Activated CD4-positive, alpha-beta memory T cell treated with anti-CD3 and anti-CD28 coated beads, Interleukin-2, amount 10 ng/mL, durations not matched to agents 7 days and 5 days (primary cell): ENCODE measurements at regions of chr6 and their contacts with region 1.

Region 1: GRCh38 chr6:105992315-105992961 is 93.7 kb upstream of the PRDM1 start:
- DNase-seq: peak; percentile 92
- H3K4me3 Mint-ChIP-seq: peak overlapping the region; percentile 87
- H3K27ac Mint-ChIP-seq: peak overlapping the region; percentile 74
- H3K4me1 Mint-ChIP-seq: peaks cover 70% of the 10 kb centered on the region
- H3K27me3 Mint-ChIP-seq: peaks cover 5% of the 10 kb centered on the region

Region 2: DNA sequence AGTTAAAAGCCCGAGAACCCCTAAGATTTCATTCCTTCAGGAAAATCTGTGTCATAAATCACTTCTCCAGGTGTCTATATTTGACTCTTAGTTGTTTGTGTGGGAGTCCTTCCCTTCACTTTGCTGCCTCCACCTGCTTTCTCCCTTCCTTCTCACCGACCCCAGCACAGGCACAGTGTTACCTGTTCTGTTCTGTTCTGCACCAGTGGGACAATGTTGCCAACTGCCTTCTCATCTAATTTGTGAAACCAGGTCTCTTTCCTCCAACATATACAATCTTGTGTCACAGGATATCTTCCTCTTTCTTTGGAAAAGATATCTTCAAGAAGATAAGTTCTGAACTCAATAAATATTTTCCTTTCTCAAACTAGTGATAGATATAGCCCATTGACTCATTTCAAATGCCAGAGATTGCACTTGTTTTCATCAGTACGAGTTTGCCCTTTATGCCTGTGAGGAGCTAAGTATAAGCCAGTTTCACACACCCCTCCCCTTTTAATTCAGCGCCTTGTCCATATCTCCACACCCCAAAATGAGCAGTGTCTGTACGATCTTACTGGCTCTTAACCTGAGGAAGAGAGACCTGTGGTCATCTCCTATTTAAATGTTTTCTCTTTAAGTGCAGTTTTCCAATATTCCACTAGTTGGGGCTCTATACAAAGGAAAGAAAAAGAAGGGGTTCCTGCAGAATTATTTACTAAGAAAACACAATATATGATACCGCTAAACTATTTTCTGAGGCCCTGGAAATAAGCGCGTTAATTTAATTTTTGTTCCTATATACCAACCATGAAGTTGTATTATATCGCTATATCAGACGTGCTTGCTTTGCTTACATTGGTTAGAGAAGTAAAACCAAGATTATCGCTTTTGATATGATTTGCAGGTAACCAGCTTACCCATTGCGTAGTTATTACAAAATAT is 507.9 kb before region 1 on chr6:
- CTCF ChIA-PET with region 1: interaction called, 4 read pairs
- POLR2A ChIA-PET with region 1: interaction called, 23 read pairs
- DNase-seq: peak; percentile 23
- H3K4me3 Mint-ChIP-seq: peak overlapping the region; percentile 9
- H3K27ac Mint-ChIP-seq: peak overlapping the region; percentile 66
- H3K4me1 Mint-ChIP-seq: peaks cover 76% of the 10 kb centered on the region
- H3K27me3 Mint-ChIP-seq: no peaks in the 10 kb centered on the region

Region 3: GRCh38 chr6:105810105-105810921 is 182.1 kb before region 1 on chr6:
- CTCF ChIA-PET with region 1: interaction called, 7 read pairs
- POLR2A ChIA-PET with region 1: interaction called, 29 read pairs
- DNase-seq: peak; percentile 83
- H3K4me3 Mint-ChIP-seq: peak overlapping the region; percentile 33
- H3K27ac Mint-ChIP-seq: peak overlapping the region; percentile 92
- H3K4me1 Mint-ChIP-seq: peaks cover 78% of the 10 kb centered on the region
- H3K27me3 Mint-ChIP-seq: no peaks in the 10 kb centered on the region

Region 4: DNA sequence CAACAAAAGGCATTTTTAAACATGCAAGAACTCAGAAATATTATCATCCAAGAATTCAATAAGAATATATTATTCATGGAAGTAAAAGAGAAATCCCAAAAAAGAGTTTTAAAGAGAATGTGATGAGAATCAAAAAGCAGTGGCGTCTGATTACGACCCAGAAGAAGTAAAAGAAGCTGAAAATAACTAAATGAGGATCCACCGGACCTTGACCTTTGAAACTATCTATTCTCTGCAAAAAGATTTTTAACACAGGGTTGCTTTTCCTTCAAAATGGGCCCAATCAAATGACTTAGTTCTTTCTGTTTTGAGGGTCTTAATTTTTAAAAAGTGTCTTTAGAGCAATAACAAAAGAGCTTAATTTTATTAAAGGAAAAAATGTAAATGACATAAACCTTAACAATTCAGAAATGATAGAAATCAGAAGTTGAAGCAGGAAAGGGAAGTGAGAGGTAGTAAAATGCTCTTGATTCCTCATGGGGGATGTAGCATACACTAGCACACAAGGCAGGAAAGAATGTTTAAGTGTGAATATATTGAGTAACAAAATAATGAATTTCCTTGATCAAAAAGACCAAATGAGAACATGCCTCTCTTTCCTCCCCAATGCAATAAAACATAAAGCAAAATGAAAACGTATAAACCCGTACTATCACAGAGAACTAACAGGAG is 129.4 kb before region 1 on chr6:
- CTCF ChIA-PET with region 1: no interaction called
- POLR2A ChIA-PET with region 1: no interaction called
- DNase-seq: no peak
- H3K4me3 Mint-ChIP-seq: no peak overlapping the region
- H3K27ac Mint-ChIP-seq: no peak overlapping the region
- H3K4me1 Mint-ChIP-seq: peaks cover 6% of the 10 kb centered on the region
- H3K27me3 Mint-ChIP-seq: peaks cover 29% of the 10 kb centered on the region

Region 5: GRCh38 chr6:105880030-105880492 is 112.4 kb before region 1 on chr6:
- CTCF ChIA-PET with region 1: no interaction called
- POLR2A ChIA-PET with region 1: no interaction called
- DNase-seq: peak; percentile 25
- H3K4me3 Mint-ChIP-seq: peak overlapping the region; percentile 39
- H3K27ac Mint-ChIP-seq: no peak overlapping the region
- H3K4me1 Mint-ChIP-seq: peaks cover 56% of the 10 kb centered on the region
- H3K27me3 Mint-ChIP-seq: peaks cover 4% of the 10 kb centered on the region

Region 6: DNA sequence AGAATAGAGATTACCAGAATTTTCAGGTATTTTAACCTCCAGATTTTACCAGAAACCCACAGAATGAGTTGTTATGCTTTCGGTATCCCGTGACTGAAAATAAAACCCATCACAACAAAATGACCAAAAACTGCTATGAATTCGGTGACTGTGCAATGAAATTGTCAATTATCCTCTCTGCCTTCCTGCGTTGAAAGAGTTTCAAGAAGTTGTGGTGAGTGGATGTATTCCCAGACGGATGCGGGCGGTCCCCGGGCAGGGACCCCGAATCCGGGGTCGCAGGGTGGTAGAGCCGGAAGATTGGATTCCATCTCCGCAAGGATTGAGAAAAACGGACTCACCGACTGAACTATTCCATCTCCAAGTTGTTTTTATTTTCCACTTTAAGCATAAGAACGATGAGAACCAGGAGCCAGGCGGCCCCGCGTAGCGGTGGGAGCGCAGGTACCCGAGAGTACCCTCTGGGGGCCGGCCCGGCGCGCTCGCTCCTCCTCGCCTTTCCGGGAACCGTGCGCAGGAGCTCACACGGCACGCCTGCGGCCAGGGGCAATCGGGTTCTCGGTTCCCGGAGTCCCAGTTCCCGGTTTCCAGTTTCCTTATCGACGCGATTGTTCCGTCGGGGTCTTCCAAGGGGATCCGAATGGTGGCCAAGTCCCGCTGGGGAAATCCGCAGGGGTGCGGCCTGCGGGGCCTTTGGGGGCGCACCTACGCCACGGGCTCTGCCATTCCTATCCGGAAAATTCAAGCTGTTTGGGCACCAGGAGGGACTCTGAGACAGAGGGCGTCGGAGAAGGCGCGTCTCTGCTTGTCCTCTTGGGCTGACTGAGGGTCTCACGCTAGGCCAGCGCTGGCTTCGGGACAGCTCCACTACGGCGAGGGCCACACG is 11.2 kb before region 1 on chr6:
- CTCF ChIA-PET with region 1: interaction called, 80 read pairs
- POLR2A ChIA-PET with region 1: interaction called, 323 read pairs
- DNase-seq: peak; percentile 70
- H3K4me3 Mint-ChIP-seq: peak overlapping the region; percentile 87
- H3K27ac Mint-ChIP-seq: peak overlapping the region; percentile 93
- H3K4me1 Mint-ChIP-seq: peaks cover 78% of the 10 kb centered on the region
- H3K27me3 Mint-ChIP-seq: no peaks in the 10 kb centered on the region

Region 7: GRCh38 chr6:106011476-106011875 is 19.0 kb after region 1 on chr6:
- CTCF ChIA-PET with region 1: no interaction called
- POLR2A ChIA-PET with region 1: no interaction called
- DNase-seq: no peak
- H3K4me3 Mint-ChIP-seq: no peak overlapping the region
- H3K27ac Mint-ChIP-seq: no peak overlapping the region
- H3K4me1 Mint-ChIP-seq: peaks cover 3% of the 10 kb centered on the region
- H3K27me3 Mint-ChIP-seq: peaks cover 5% of the 10 kb centered on the region

Region 8: DNA sequence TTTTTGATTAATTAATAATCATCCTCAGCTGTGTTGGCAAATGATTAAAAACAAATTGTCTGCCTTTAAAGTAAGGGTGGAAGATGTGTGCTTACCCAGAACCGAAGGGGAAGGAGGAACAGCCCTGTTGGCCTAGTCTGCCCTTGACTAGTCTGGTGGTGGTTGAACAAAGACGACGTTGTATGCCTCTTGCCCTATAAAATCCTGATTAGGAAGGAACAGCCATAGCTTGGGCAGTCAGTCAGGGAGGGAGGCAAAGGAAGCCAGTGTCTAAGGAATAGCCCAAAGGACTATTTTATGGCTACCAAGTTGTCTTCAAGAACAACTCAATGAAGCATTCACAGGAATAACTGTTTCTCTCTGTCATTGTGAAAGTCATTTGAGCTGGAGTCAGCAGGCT is 164.4 kb after region 1 on chr6:
- CTCF ChIA-PET with region 1: no interaction called
- POLR2A ChIA-PET with region 1: no interaction called
- DNase-seq: no peak
- H3K4me3 Mint-ChIP-seq: no peak overlapping the region
- H3K27ac Mint-ChIP-seq: no peak overlapping the region
- H3K4me1 Mint-ChIP-seq: peaks cover 43% of the 10 kb centered on the region
- H3K27me3 Mint-ChIP-seq: no peaks in the 10 kb centered on the region

Region 9: GRCh38 chr6:106181664-106182418 is 189.4 kb after region 1 on chr6:
- CTCF ChIA-PET with region 1: interaction called, 3 read pairs
- POLR2A ChIA-PET with region 1: interaction called, 10 read pairs
- DNase-seq: no peak
- H3K4me3 Mint-ChIP-seq: no peak overlapping the region
- H3K27ac Mint-ChIP-seq: peak overlapping the region; percentile 41
- H3K4me1 Mint-ChIP-seq: peaks cover 58% of the 10 kb centered on the region
- H3K27me3 Mint-ChIP-seq: peaks cover under 1% of the 10 kb centered on the region